K562 (cell line): ENCODE measurements at regions of chr1 and their contacts with region 1.

Region 1: DNA sequence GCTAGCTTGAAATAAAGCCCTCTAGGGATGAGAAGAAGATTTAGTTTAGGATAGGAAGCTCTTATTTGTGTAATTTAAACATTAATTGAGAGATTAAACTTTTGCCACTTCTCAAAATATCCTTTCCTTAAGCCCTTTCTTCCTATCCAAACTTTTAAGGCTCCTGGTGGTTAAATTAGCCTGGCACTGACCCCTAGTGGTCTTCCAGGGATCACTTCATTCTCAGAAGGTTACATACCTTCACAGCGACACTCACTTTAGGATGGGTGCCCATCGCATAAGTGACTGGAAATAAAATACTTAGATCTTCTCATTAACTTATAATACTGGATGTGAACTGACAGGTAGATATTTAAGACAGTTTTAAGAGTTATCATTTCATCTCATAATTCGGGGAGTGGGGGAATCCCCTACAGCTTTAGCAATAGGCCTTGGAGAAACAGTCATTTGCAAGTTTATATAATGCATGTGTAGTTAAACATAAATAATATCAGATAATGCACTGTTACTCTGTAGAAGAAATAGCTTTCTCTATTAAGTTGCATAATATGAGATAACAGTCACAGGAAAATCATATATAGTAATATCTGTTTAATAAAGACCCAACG is 7.4 kb downstream of the LHX9 start:
- DNase-seq: peak; percentile 61 to 79 (median 68)
- ATAC-seq: peak; percentile 80
- H3K4me3 ChIP-seq: no peak overlapping the region
- H3K27ac ChIP-seq: no peak overlapping the region
- H3K4me1 ChIP-seq: peaks cover 3 to 10% of the 10 kb centered on the region in 2 experiments; a peak in 3 of 5 replicates
- H3K27me3 ChIP-seq: peaks cover 19 to 26% of the 10 kb centered on the region in 2 experiments
- CTCF ChIP-seq: peak; percentile 80 to 92 (median 84)
- EP300 ChIP-seq: no peak
- POLR2A ChIP-seq: no peak
- RAD21 ChIP-seq: peak; percentile 88 to 93

Region 2: DNA sequence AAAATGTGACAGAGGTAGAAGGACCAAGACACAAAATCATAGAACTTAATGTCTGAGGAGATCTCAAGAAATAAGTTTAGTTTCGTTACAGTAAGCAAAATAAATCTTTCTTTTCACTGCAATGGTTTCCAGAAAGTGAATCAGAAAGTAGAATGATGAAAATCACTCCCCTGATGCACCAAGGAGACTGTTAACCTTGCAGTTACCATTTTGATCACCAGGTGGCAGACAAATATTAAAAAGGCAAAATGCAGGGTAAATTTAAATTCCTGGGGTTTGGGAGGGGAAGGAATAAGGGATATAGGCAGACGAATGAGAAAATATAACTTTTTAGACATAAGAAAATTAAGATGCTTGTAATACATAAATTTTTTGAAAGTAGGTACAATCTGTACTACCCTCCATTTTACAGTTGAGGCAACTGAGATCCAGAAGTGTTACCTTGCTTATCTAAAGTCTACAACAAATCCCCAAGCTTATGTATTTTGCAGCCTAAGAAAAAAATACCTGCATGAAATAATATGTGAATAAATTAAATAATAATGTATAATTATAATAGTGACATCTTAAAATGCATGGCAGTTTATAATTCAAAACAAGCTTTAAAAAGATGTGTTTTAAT is 403.4 kb before region 1 on chr1:
- CTCF ChIA-PET with region 1: interaction called, 23 read pairs
- POLR2A ChIA-PET with region 1: no interaction called
- in situ Hi-C with region 1: loop called (anchors 5 kb)
- intact Hi-C with region 1: loop called (anchors 1 kb)
- DNase-seq: peak; percentile 48 to 56 (median 52)
- ATAC-seq: peak; percentile 65
- H3K4me3 ChIP-seq: no peak overlapping the region
- H3K27ac ChIP-seq: no peak overlapping the region
- H3K4me1 ChIP-seq: no peaks in the 10 kb centered on the region
- H3K27me3 ChIP-seq: no peaks in the 10 kb centered on the region
- CTCF ChIP-seq: peak; percentile 67 to 85 (median 72); a peak in 5 of 6 replicates
- EP300 ChIP-seq: no peak
- POLR2A ChIP-seq: no peak
- RAD21 ChIP-seq: peak; percentile 73 to 85

Region 3: GRCh38 chr1:197614916-197615692 is 309.5 kb before region 1 on chr1:
- CTCF ChIA-PET with region 1: interaction called, 13 read pairs
- POLR2A ChIA-PET with region 1: no interaction called
- in situ Hi-C with region 1: no loop called
- intact Hi-C with region 1: loop called (anchors 1 kb)
- DNase-seq: peak in 2 of 4 experiments; percentile 18 to 62
- ATAC-seq: peak; percentile 95
- H3K4me3 ChIP-seq: no peak overlapping the region
- H3K27ac ChIP-seq: no peak overlapping the region
- H3K4me1 ChIP-seq: no peaks in the 10 kb centered on the region
- H3K27me3 ChIP-seq: no peaks in the 10 kb centered on the region
- CTCF ChIP-seq: peak; percentile 63 to 74 (median 67)
- EP300 ChIP-seq: no peak
- POLR2A ChIP-seq: no peak
- RAD21 ChIP-seq: peak; percentile 85 to 88

Region 4: GRCh38 chr1:197775282-197776262 is 149.0 kb before region 1 on chr1 and contains the start of gene DENND1B:
- CTCF ChIA-PET with region 1: no interaction called
- POLR2A ChIA-PET with region 1: no interaction called
- in situ Hi-C with region 1: no loop called
- intact Hi-C with region 1: loop called (anchors 5 kb)
- DNase-seq: peak; percentile 74 to 92 (median 80)
- ATAC-seq: peak; percentile 81
- H3K4me3 ChIP-seq: peak within 1 kb of the TSS; percentile 71
- H3K27ac ChIP-seq: peak within 1 kb of the TSS; percentile 83
- H3K4me1 ChIP-seq: peaks cover 21 to 36% of the 10 kb centered on the region in 2 experiments
- H3K27me3 ChIP-seq: no peaks in the 10 kb centered on the region
- CTCF ChIP-seq: peak in 2 of 3 experiments; percentile 13 to 28; a peak in 2 of 6 replicates
- EP300 ChIP-seq: no peak
- POLR2A ChIP-seq: peak; percentile 66
- RAD21 ChIP-seq: peak; percentile 10 to 20; a peak in 1 of 4 replicates
- polyA plus RNA-seq, gene DENND1B: 2.1 to 3.3 TPM

Region 5: DNA sequence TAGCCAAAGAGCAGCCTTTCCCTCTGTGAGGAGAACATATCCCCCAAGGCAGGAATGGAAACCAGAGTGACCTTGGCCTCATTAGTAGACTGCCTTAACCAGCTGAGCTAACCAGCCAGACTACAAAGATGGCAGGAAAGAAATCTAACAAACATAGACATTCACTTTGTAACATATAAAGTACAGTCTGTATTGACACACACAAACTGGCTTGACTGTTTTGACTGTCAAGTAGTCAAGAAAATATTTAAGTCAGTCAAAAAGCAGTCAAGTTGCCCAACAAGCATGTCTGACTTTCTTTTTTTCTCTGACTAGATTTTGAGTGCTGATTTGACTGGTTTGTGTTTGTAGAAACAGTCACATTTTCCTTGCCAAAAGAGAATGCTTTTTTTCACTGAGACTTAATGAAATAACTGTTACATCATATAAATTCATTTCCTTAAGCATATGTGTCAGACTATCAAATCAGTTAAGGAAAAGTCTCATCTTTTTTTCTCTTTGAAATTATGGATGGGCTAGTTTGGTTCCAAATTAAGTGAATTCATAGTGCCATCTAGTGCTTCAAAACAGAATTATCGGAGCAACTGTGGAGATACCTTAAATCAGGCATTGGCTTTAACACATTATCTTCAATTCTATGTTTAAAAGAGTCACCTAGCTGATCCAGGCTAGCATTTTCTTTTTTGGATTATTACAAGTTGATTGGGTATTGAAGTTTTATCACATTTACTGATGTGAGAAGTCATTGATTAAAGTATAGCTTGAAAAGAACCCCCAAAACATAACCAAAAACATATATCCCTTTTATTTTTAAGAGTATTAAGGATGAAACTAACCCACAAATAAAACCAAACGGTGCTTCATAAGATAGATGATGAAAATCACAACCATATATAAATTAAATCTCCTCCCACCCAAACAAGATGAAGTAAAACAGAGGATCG is 540.9 kb after region 1 on chr1:
- CTCF ChIA-PET with region 1: interaction called, 3 read pairs
- POLR2A ChIA-PET with region 1: no interaction called
- in situ Hi-C with region 1: no loop called
- intact Hi-C with region 1: loop called (anchors 5 kb)
- DNase-seq: peak in 2 of 4 experiments; percentile 19 to 54
- ATAC-seq: peak; percentile 89
- H3K4me3 ChIP-seq: no peak overlapping the region
- H3K27ac ChIP-seq: no peak overlapping the region
- H3K4me1 ChIP-seq: no peaks in the 10 kb centered on the region
- H3K27me3 ChIP-seq: no peaks in the 10 kb centered on the region
- CTCF ChIP-seq: peak; percentile 29 to 73 (median 47); a peak in 3 of 6 replicates
- EP300 ChIP-seq: no peak
- POLR2A ChIP-seq: no peak
- RAD21 ChIP-seq: peak; percentile 90 to 95